Esophagus muscularis mucosa (tissue), 4 donors: ENCODE measurements at regions of chr1 and their contacts with region 1.

Region 1: GRCh38 chr1:156456622-156457465 is 43.7 kb downstream of the MEF2D start:
- DNase-seq: peak; percentile 100
- H3K4me3 ChIP-seq: peak overlapping the region; percentile 65 to 75 (median 68)
- H3K27ac ChIP-seq: peak overlapping the region; percentile 96 to 100 (median 99)
- H3K4me1 ChIP-seq: peaks cover 9 to 28% (median 22%) of the 10 kb centered on the region in 4 donors
- H3K27me3 ChIP-seq: no peaks in the 10 kb centered on the region
- CTCF ChIP-seq: no peak
- EP300 ChIP-seq: peak; percentile 77
- POLR2A ChIP-seq: peak; percentile 75

Region 2: DNA sequence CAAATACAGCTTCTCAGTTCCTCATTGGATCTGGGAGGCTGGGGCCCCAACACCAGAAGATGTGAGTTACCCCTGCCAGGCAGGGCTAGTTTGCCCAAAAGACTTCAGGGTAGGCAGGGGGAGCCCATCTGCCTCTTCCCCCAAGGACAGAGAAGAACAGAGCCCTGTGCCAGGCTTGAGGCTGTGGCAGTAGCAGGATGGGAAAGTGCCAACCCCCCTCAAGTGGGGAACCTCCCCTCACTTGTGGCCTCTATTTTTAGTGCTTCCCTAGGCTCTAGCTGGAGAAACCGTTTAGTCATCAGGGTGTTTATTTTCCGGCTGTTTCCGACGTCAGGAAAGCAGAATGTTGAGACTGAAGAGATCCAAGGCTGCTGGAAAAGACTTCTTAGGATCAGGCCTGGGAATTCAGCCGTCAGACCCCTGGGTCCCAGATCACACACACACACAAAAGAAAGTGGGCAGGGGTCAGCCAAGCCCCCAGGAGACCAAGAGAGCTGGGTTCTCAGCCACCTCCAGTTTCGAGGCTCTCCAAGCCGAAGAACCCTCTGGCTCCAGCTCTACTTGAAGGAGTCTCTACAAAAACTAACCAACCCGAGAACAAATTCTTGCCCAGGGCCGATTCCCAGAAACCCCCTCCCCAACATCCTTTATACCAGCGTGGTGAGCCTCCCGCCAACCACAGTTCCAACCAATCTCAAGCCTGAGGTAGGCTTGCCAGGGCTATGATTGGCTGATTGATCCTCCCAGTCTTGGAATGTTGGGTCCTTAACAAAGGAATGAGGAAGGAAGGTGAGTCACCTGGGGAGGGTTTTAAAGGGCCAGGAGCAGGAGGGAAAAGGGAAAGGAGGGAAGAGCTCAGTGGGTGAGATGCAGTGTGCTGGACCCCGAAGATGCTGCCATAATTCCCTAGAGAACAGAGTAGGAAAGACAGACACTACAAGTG is 46.2 kb after region 1 on chr1:
- intact Hi-C with region 1: loop called (anchors 2 kb)
- DNase-seq: peak; percentile 95
- H3K4me3 ChIP-seq: peak overlapping the region; percentile 24 to 45 (median 34)
- H3K27ac ChIP-seq: peak overlapping the region; percentile 98 to 100 (median 99)
- H3K4me1 ChIP-seq: peaks cover 53 to 75% (median 71%) of the 10 kb centered on the region in 4 donors
- H3K27me3 ChIP-seq: no peaks in the 10 kb centered on the region
- CTCF ChIP-seq: peak in 1 of 3 experiments; percentile 19
- EP300 ChIP-seq: peak; percentile 70
- POLR2A ChIP-seq: no peak

Region 3: GRCh38 chr1:156591432-156592157 is 134.8 kb after region 1 on chr1 and contains the start of gene NAXE:
- intact Hi-C with region 1: loop called (anchors 5 kb)
- DNase-seq: peak; percentile 93
- H3K4me3 ChIP-seq: peak within 1 kb of the TSS; percentile 72 to 87 (median 80)
- H3K27ac ChIP-seq: peak within 1 kb of the TSS; percentile 85 to 91 (median 88)
- H3K4me1 ChIP-seq: peaks cover 11 to 21% (median 19%) of the 10 kb centered on the region in 4 donors
- H3K27me3 ChIP-seq: no peaks in the 10 kb centered on the region
- CTCF ChIP-seq: peak in 1 of 3 experiments; percentile 16
- EP300 ChIP-seq: no peak
- POLR2A ChIP-seq: peak; percentile 43
- total RNA-seq, gene NAXE: 73.5 to 98.0 (median 85.2) TPM

Region 4: DNA sequence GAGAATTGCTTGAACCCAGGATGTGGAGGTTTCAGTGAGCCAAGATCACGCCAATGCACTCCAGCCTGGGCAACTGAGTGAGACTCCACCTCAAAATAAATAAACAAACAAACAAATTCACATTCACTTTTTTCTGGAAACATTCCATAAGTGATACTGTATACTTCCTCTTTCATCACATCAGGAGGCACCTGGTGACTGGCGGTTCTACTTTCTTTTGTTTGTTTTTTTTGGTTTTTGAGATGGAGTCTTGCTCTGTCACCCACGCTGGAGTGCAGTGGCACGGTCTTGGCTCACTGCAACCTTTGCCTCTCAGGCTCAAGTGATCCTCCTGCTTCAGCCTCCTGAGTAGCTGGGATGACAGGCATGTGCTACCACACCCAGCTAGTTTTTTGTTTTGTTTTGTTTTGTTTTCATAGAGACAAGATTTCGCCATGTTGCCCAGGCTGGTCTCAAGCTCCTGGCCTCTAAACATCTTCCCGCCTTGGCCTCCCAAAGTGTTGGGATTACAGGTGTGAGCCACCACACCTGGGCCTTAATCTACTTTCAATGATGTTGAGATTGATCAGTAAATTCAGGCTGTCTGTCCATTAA is 173.1 kb after region 1 on chr1:
- intact Hi-C with region 1: no loop called
- DNase-seq: no peak
- H3K4me3 ChIP-seq: no peak overlapping the region
- H3K27ac ChIP-seq: no peak overlapping the region
- H3K4me1 ChIP-seq: peaks cover 11 to 12% (median 12%) of the 10 kb centered on the region in 4 donors
- H3K27me3 ChIP-seq: peaks cover 9 to 98% (median 28%) of the 10 kb centered on the region in 4 donors
- CTCF ChIP-seq: no peak
- EP300 ChIP-seq: no peak
- POLR2A ChIP-seq: no peak